ENCODE measurements at regions of chr3 and their contacts with region 1.

Region 1: GRCh38 chr3:39383045-39383880 is at the start of gene SLC25A38:
- DNase-seq: peak; percentile 56 to 81
- H3K4me3 ChIP-seq: peak within 1 kb of the TSS; percentile 68 to 93 (median 86)
- H3K27ac ChIP-seq: peak within 1 kb of the TSS; percentile 90
- H3K4me1 ChIP-seq: peaks cover 3 to 6% (median 5%) of the 10 kb centered on the region in 4 experiments; a peak in 6 of 7 replicates
- H3K27me3 ChIP-seq: no peaks in the 10 kb centered on the region
- CTCF ChIP-seq: peak in 2 of 3 experiments; percentile 40 to 44; a peak in 2 of 4 replicates
- EP300 ChIP-seq: no peak
- POLR2A ChIP-seq: peak in 1 of 2 experiments; percentile 44; a peak in 2 of 3 replicates
- RAD21 ChIP-seq: peak in 1 of 2 experiments; percentile 20; a peak in 1 of 4 replicates
- total RNA-seq, gene SLC25A38: 37.3 and 41.2 TPM in 2 replicates

Region 2: DNA sequence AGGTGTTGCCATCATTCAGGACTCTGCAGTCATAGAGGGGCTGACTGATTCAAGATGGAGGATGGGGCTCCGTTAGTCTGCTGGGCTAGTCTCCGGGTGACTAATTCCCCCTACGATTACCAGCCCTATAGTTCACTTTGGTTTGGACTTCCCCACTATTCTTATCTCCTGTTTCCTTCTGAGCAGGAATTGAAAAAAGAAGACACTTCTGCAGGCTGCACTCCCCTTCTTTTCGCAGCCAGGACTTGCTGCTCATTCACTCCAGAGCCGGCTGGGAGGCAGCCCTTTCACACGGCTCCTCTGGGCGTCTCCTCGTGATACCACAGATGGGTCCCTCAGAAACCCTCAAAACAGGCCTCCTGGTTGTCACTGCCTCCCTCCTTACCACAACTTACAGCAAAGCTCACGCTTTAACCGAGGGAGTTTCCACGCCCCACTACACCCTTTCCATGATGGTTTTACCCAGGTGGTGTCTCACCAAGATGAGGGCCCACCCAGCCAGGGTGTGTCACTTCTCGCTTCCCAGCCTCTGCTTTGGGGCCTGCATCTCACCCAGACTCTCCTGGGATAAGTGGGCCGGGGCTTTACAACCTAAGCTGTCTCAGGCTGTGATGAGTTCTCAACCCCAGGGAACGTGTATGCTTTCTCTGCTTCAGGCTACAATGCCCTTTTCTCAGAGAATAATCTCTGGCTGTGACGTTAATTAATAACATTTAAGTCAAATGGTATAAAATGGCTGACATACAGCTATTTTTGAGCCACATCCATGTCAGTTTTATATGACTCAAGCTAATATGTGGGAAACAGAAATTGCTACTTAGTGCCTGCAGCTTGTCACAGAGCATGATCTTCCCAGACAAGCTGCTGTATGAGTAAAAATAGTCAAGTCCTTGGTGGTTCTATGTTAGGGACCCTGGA is 115.4 kb before region 1 on chr3:
- CTCF ChIA-PET with region 1: no interaction called
- POLR2A ChIA-PET with region 1: no interaction called
- DNase-seq: no peak
- H3K4me3 ChIP-seq: no peak overlapping the region
- H3K27ac ChIP-seq: no peak overlapping the region
- H3K4me1 ChIP-seq: no peaks in the 10 kb centered on the region
- H3K27me3 ChIP-seq: no peaks in the 10 kb centered on the region
- CTCF ChIP-seq: no peak
- EP300 ChIP-seq: no peak
- POLR2A ChIP-seq: no peak
- RAD21 ChIP-seq: no peak

Region 3: DNA sequence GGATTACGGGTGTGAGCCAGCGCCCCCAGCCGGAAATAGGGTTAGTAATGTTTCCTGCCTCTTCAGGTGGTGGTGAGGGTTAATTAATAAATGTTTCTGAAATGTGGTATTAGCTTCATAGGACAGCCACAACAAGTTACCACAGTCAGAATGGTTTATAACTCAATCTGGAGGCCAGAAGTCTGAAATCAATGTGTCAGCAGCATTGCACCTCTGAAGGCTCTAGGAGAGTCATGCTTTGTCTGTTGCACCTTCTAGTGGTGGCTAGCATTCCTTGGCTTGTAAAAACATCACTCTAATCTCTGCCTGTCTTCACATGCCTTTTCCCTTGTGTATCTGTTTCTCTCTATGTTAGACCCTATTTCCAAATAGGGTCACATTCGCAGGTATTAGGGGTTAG is 15.4 kb after region 1 on chr3:
- CTCF ChIA-PET with region 1: interaction called, 10 read pairs
- POLR2A ChIA-PET with region 1: interaction called, 771 read pairs
- DNase-seq: no peak
- H3K4me3 ChIP-seq: no peak overlapping the region
- H3K27ac ChIP-seq: no peak overlapping the region
- H3K4me1 ChIP-seq: no peaks in the 10 kb centered on the region; a peak in 2 of 7 replicates
- H3K27me3 ChIP-seq: no peaks in the 10 kb centered on the region
- CTCF ChIP-seq: no peak; a peak in 1 of 4 replicates
- EP300 ChIP-seq: no peak
- POLR2A ChIP-seq: no peak
- RAD21 ChIP-seq: 0 out of 4 replicates have a peak, but pooled peaks of 1 of the 2 experiments have one; percentile 7

Measured in H1 (cell line).